ENCODE measurements at regions of chrX and their contacts with region 1.

Region 1: GRCh38 chrX:118839334-118839958 is 15.8 kb downstream of the ZCCHC12 start:
- DNase-seq: peak; percentile 80
- ATAC-seq: peak; percentile 90
- H3K4me3 ChIP-seq: peak overlapping the region in 4 of 5 experiments; percentile 34 to 48 (median 38)
- H3K4me3 Mint-ChIP-seq: peak overlapping the region; percentile 69
- H3K27ac ChIP-seq: no peak overlapping the region
- H3K27ac Mint-ChIP-seq: no peak overlapping the region
- H3K4me1 ChIP-seq: peaks cover 4 to 8% of the 10 kb centered on the region in 2 donors
- H3K4me1 Mint-ChIP-seq: peaks cover 7% of the 10 kb centered on the region
- H3K27me3 ChIP-seq: peaks cover 0 to 7% (median 2%) of the 10 kb centered on the region in 4 experiments
- H3K27me3 Mint-ChIP-seq: peaks cover 6% of the 10 kb centered on the region
- CTCF ChIP-seq: peak; percentile 76

Region 2: DNA sequence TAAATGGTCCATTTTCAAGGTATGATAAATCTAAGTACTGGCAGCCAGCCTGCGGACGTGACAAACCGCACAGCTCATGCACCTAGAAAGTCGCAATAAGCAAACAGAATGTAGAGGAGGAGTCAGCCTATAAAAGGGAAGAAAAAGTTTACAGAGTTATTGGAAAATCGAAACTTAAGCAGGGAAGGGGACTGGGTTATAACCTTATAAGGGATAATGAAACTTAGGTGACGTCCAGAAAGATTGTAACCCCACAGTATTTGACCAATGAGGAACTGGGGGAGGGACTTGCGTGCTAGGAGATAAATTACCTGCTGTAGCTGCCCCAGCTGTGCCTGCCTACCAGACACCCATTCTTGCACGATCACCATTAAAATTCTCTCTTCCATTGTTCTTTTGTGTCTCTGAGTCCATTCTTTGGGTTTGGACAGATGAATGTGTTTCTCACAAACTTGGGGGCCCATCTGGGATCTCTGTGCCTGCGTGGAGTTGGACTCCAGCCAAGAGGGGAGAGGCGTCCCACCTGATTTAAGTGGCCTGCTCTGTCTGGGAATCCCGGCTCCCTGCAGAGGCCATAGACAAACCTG is 45.2 kb after region 1 on chrX:
- CTCF ChIA-PET with region 1: no interaction called
- POLR2A ChIA-PET with region 1: no interaction called
- intact Hi-C with region 1: no loop called
- DNase-seq: no peak
- ATAC-seq: no peak
- H3K4me3 ChIP-seq: no peak overlapping the region
- H3K4me3 Mint-ChIP-seq: no peak overlapping the region
- H3K27ac ChIP-seq: no peak overlapping the region
- H3K27ac Mint-ChIP-seq: no peak overlapping the region
- H3K4me1 ChIP-seq: no peaks in the 10 kb centered on the region
- H3K4me1 Mint-ChIP-seq: no peaks in the 10 kb centered on the region
- H3K27me3 ChIP-seq: no peaks in the 10 kb centered on the region
- H3K27me3 Mint-ChIP-seq: peaks cover 10% of the 10 kb centered on the region
- CTCF ChIP-seq: no peak

Region 3: GRCh38 chrX:119235872-119236622 is 396.6 kb after region 1 on chrX and contains the start of gene PGRMC1:
- CTCF ChIA-PET with region 1: no interaction called
- POLR2A ChIA-PET with region 1: no interaction called
- intact Hi-C with region 1: loop called (anchors 5 kb)
- DNase-seq: peak; percentile 88
- ATAC-seq: peak; percentile 95
- H3K4me3 ChIP-seq: peak within 1 kb of the TSS; percentile 34 to 71 (median 67)
- H3K4me3 Mint-ChIP-seq: peak within 1 kb of the TSS; percentile 89
- H3K27ac ChIP-seq: peak within 1 kb of the TSS in 1 of 2 donors; percentile 57
- H3K27ac Mint-ChIP-seq: peak within 1 kb of the TSS; percentile 89
- H3K4me1 ChIP-seq: peaks cover 8 to 16% of the 10 kb centered on the region in 2 donors
- H3K4me1 Mint-ChIP-seq: peaks cover 19% of the 10 kb centered on the region
- H3K27me3 ChIP-seq: peaks cover 0 to 4% (median 1%) of the 10 kb centered on the region in 4 experiments
- H3K27me3 Mint-ChIP-seq: no peaks in the 10 kb centered on the region
- CTCF ChIP-seq: no peak
- total RNA-seq, gene PGRMC1: 9.0 and 9.1 TPM in 2 replicates

Measured in B cell (primary cell).